ENCODE measurements at regions of chr18 and their contacts with region 1.

Region 1: DNA sequence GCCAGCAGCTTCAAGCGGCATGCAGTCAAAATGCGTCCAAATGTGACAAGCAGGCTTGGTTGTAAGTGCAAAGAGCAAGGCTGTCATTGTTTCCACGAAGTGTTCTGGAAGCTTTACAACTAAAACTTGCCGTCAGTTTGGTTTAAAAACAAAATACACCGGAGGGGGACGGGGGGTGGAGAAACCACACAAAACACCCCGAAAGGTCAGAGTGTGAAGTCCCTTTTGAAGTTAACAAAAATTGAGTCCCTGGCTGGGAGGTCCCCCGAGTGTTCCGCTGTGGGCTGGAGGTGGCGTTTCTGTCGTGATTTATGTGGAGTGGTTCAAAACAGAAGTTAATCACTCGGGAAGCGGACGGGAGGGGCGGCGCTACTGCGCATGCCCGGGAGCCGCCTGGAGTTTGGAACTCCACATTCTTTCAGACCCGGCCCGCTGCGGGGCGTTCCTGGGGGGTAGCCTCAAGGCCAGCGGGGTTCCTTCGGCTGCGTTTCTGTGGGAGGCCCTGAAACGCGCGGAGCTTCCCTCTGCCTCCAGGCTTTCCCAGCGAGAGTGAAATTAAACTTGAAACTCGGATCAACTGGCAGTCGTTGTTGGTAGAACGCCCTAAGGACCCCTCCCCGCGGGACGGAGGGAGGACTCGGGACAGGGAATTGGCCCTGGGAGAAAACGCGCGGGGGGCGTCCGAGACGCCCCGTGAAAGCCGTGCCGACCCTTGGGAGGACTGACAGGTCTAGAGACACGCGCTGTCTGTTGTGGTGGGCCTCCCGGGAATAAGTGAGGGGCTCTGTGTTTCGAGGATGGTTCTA is 1.4 kb downstream of the TGIF1 start:
- DNase-seq: peak; percentile 98

Region 2: GRCh38 chr18:3261371-3262246 is 189.8 kb before region 1 on chr18 and contains the start of gene MYL12B:
- intact Hi-C with region 1: loop called in 1 of 2 experiments (anchors 5 kb)
- DNase-seq: peak; percentile 96
- total RNA-seq, gene MYL12B: 243 to 267 TPM

Region 3: DNA sequence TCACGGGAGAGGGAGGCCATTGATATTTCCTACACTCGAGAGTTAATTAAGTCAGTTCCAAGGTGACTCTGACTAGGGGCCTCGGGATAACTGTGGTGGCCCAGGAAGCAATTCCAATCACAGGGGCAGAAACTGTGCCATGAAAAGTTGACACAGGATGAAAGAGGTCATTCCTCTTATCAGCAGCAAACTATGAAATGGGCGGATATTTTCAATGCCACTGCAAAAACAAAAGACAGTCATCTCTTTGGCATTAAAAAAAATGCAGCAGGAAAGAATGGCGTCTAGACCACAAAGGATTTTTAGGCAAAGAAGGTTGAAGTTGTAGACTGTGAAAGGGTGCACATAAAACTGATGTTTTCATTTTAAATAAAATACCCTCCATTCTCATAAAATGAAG is 48.6 kb after region 1 on chr18:
- intact Hi-C with region 1: loop called in 1 of 2 experiments (anchors 5 kb)
- DNase-seq: no peak

Region 4: DNA sequence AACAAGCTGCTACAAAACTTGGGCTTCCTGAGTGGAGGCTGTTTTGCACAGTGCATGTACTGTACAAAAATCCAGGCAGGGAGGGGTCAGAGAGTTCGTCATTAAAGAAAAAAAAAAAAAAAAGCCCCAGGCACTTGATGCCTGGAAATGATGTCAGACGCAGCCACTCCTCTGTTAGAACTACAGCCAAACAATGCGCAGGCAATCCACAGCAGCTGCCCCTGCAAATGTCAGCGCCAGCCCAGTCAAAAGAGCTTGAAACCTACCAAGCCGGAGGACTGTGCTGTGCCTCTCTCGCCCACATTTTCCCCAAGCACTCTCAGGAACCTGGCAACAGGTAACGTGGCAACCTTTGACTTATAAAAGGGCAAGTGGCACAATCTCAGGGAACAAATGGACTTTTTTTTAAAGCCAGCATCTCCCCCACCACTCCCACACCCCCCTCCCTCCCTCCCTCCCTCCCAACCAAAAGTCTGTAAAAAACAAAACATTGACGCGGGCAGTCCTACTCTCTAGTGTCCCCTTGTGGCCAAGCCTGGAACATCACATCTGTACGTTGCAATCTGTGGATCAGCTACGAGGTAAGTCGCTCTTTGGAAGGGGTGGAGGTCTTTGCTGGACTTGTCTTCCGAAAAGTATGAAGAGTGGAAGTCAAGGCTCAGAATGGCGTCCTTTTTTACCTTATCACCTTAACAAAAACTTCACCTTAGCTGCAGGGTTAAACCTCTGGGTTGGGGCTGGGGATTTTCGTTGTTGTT is 142.7 kb after region 1 on chr18:
- intact Hi-C with region 1: loop called (anchors 5 kb)
- DNase-seq: peak; percentile 95

Region 5: DNA sequence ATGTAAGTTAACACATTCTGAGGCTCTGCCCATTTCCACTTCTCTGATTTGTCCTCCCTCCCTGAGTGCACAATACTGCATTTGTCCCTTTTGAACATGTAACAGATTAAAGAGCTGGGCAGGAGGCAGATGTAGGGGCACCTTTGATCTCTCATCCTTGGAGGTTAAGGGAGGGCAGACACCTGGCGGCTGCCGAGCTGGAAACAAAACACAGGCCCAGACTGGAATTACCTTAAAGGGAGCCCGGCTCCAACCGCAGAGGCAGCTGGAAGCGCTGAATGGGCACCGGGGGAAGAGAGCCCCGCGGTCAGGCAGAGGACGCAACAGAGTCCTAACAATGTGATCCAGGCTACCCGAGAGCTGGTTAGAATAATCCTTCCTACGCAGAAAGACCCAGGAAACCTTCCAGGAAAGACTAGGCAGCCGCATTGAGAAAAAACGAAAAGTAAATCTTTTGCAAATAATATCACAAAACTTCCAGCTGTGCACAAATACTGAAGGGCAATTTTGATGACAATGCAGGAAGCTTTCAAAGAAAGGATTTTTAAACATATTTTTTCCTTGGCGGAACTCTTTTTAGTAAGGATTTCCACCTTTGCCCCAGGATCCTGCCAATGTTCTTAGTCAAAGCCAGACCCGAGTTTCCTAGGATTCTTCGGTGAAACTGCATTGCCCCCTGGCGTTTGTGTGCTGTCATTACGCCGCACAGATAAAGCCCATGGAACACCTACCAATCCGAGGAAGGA is 214.6 kb after region 1 on chr18:
- intact Hi-C with region 1: loop called (anchors 10 kb)
- DNase-seq: peak; percentile 93